Gastrocnemius medialis (tissue), 4 donors: ENCODE measurements at regions of chr13 and their contacts with region 1.

Region 1: GRCh38 chr13:42110410-42111155 is 62.1 kb downstream of the DGKH start:
- DNase-seq: no peak
- ATAC-seq: peak; percentile 60 to 67
- H3K4me3 ChIP-seq: no peak overlapping the region
- H3K27ac ChIP-seq: no peak overlapping the region
- H3K4me1 ChIP-seq: peaks cover 3 to 10% of the 10 kb centered on the region in 2 donors
- H3K27me3 ChIP-seq: no peaks in the 10 kb centered on the region
- CTCF ChIP-seq: peak; percentile 76 to 86 (median 82)
- POLR2A ChIP-seq: no peak

Region 2: GRCh38 chr13:41352935-41353840 is 757.4 kb before region 1 on chr13:
- in situ Hi-C with region 1: loop called in 1 of 4 experiments (anchors 25 kb)
- intact Hi-C with region 1: no loop called
- DNase-seq: no peak
- ATAC-seq: peak; percentile 30 to 58
- H3K4me3 ChIP-seq: no peak overlapping the region
- H3K27ac ChIP-seq: no peak overlapping the region
- H3K4me1 ChIP-seq: peaks cover 12 to 13% of the 10 kb centered on the region in 2 donors
- H3K27me3 ChIP-seq: no peaks in the 10 kb centered on the region
- CTCF ChIP-seq: peak; percentile 58 to 86 (median 72)
- POLR2A ChIP-seq: no peak

Region 3: GRCh38 chr13:41384755-41385503 is 725.7 kb before region 1 on chr13:
- in situ Hi-C with region 1: loop called in 1 of 4 experiments (anchors 25 kb)
- intact Hi-C with region 1: no loop called
- DNase-seq: no peak
- ATAC-seq: no peak
- H3K4me3 ChIP-seq: no peak overlapping the region
- H3K27ac ChIP-seq: no peak overlapping the region
- H3K4me1 ChIP-seq: no peaks in the 10 kb centered on the region
- H3K27me3 ChIP-seq: no peaks in the 10 kb centered on the region
- CTCF ChIP-seq: peak in 2 of 5 experiments; percentile 24 to 40
- POLR2A ChIP-seq: no peak

Region 4: DNA sequence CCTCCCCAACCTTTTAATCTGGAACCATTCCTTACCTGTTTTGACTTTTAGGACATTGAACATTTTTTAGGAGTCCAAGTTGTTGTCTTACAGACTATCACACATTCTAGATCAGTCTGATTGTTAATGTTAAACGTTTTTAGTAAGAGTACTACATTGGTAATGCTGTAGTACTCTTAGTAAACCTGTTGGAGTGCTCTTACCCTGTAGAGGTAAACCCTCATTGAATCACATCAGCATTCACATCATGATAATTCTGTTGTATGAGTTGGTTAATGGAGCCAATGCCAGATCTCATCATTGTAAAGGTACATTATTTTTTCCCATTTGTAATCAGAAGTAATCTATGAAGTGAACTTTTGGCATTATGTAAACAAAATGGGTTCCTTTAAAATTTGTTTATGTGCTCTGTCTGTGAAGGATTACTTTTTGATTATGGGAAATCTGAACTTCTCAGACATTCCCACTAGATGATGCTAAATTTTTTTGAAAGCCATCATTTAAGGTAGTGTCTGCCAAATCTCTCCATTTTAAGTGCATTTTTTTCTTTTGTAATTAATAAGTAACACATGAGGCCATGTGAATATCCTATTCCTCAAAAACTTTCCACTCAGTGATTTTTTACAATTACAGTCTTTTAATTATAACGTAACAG is 204.9 kb before region 1 on chr13:
- in situ Hi-C with region 1: loop called in 1 of 4 experiments (anchors 5 kb)
- intact Hi-C with region 1: loop called (anchors 2 kb)
- DNase-seq: no peak
- ATAC-seq: peak; percentile 74 to 75
- H3K4me3 ChIP-seq: no peak overlapping the region
- H3K27ac ChIP-seq: no peak overlapping the region
- H3K4me1 ChIP-seq: no peaks in the 10 kb centered on the region
- H3K27me3 ChIP-seq: no peaks in the 10 kb centered on the region
- CTCF ChIP-seq: peak; percentile 22 to 70 (median 61)
- POLR2A ChIP-seq: no peak

Region 5: DNA sequence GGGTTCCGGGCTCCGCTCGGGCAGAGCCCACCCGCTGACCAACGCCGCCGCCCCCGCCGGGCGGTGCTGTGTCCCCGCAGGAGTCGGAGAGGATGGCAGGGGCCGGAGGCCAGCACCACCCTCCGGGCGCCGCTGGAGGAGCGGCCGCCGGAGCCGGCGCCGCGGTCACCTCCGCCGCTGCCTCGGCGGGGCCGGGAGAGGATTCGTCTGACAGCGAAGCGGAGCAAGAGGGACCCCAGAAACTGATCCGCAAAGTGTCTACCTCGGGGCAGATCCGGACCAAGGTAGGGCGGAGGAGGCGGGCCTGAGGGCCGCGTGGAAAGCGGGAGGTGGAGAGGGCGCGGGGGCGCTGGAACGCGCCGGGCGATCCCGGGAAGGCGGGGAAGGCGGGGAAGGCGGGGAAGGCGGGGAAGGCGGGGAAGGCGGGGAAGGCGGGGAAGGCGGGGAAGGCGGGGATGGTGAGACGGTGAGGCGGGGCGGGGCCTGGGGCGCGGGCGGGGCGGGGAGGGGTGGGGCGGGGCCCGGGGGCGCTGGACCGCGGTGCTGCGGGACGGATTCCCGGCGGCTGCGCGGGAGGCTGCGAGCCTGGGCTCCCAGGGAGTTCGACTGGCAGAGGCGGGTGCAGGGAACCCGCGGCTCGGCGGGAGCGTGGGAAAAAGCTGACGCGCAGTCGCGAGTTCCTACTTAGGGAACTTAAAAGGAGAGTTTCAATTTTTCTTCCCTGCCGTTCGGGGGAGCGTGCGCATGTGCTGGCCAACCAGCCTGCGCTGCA is 61.7 kb before region 1 on chr13:
- in situ Hi-C with region 1: no loop called
- intact Hi-C with region 1: loop called (anchors 5 kb)
- DNase-seq: peak; percentile 71
- ATAC-seq: peak; percentile 81 to 84
- H3K4me3 ChIP-seq: peak overlapping the region; percentile 67 to 95 (median 90)
- H3K27ac ChIP-seq: peak overlapping the region; percentile 74 to 88 (median 87)
- H3K4me1 ChIP-seq: peaks cover 3 to 7% of the 10 kb centered on the region in 2 donors
- H3K27me3 ChIP-seq: no peaks in the 10 kb centered on the region
- CTCF ChIP-seq: peak in 3 of 5 experiments; percentile 19 to 27 (median 22)
- POLR2A ChIP-seq: peak; percentile 26 to 37

Region 6: GRCh38 chr13:42328672-42329071 is 218.1 kb after region 1 on chr13:
- in situ Hi-C with region 1: no loop called
- intact Hi-C with region 1: no loop called
- DNase-seq: no peak
- ATAC-seq: no peak
- H3K4me3 ChIP-seq: no peak overlapping the region
- H3K27ac ChIP-seq: no peak overlapping the region
- H3K4me1 ChIP-seq: no peaks in the 10 kb centered on the region
- H3K27me3 ChIP-seq: no peaks in the 10 kb centered on the region
- CTCF ChIP-seq: no peak
- POLR2A ChIP-seq: no peak